ENCODE measurements at regions of chr17 and their contacts with region 1.

Region 1: DNA sequence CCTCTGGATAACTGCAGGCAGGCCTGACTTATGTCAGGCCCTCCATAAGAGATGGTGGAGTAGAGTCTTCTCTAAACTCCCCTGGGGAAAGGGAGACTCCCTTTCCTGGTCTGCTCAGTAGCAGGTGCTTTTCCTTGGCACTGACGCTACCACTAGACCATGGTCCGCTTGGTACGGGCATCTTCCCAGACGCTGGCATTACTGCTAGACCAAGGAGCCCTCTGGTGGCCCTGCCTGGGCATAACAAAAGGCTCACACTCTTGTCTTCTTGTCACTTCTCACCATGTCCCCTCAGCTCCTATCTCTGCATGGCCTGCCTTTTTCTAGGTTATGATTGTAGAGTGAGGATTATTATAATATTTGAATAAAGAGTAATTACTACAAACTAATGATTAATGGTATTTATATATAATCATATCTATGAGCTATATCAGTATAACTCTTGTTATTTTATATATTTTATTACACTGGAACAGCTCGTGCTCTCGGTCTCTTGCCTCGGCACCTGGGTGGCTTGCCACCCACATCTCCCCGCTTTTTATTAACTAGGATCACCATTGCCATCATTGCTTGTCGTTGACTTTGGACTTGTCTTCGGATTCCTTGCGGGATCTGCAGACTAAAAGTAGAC is 59.8 kb upstream of the ARL4D start:
- DNase-seq: peak in 1 of 2 experiments; percentile 77
- H3K4me3 ChIP-seq: no peak overlapping the region
- H3K27ac ChIP-seq: no peak overlapping the region
- H3K4me1 ChIP-seq: peaks cover 6 to 7% (median 6%) of the 10 kb centered on the region in 4 experiments; a peak in 6 of 7 replicates
- H3K27me3 ChIP-seq: no peaks in the 10 kb centered on the region
- CTCF ChIP-seq: peak; percentile 62 to 66 (median 64)
- EP300 ChIP-seq: no peak
- POLR2A ChIP-seq: no peak
- RAD21 ChIP-seq: peak; percentile 70 to 71

Region 2: GRCh38 chr17:43183921-43184320 is 155.1 kb before region 1 on chr17:
- CTCF ChIA-PET with region 1: no interaction called
- POLR2A ChIA-PET with region 1: no interaction called
- DNase-seq: no peak
- H3K4me3 ChIP-seq: no peak overlapping the region
- H3K27ac ChIP-seq: no peak overlapping the region
- H3K4me1 ChIP-seq: no peaks in the 10 kb centered on the region
- H3K27me3 ChIP-seq: no peaks in the 10 kb centered on the region
- CTCF ChIP-seq: no peak
- EP300 ChIP-seq: no peak
- POLR2A ChIP-seq: no peak
- RAD21 ChIP-seq: no peak

Region 3: GRCh38 chr17:43324205-43324893 is 14.7 kb before region 1 on chr17:
- CTCF ChIA-PET with region 1: interaction called, 11 read pairs
- POLR2A ChIA-PET with region 1: interaction called, 6 read pairs
- DNase-seq: no peak
- H3K4me3 ChIP-seq: no peak overlapping the region
- H3K27ac ChIP-seq: no peak overlapping the region
- H3K4me1 ChIP-seq: peaks cover 0 to 3% (median 0%) of the 10 kb centered on the region in 4 experiments; a peak in 2 of 7 replicates
- H3K27me3 ChIP-seq: no peaks in the 10 kb centered on the region
- CTCF ChIP-seq: peak; percentile 29 to 47 (median 43)
- EP300 ChIP-seq: no peak
- POLR2A ChIP-seq: no peak
- RAD21 ChIP-seq: peak; percentile 6 to 22; a peak in 2 of 4 replicates

Region 4: GRCh38 chr17:43467981-43468581 is 129.1 kb after region 1 on chr17:
- CTCF ChIA-PET with region 1: no interaction called
- POLR2A ChIA-PET with region 1: no interaction called
- DNase-seq: no peak
- H3K4me3 ChIP-seq: no peak overlapping the region
- H3K27ac ChIP-seq: no peak overlapping the region
- H3K4me1 ChIP-seq: no peaks in the 10 kb centered on the region
- H3K27me3 ChIP-seq: no peaks in the 10 kb centered on the region
- CTCF ChIP-seq: no peak
- EP300 ChIP-seq: no peak
- POLR2A ChIP-seq: no peak
- RAD21 ChIP-seq: no peak